Dendritic cell treated with granulocyte-macrophage colony-stimulating factor and Interleukin-4, amounts not matched to agents 40 ng/mL and 50 ng/mL, for 4 days (primary cell): ENCODE measurements at regions of chr14 and their contacts with region 1.

Region 1: GRCh38 chr14:86902176-86902950 is 1090.6 kb downstream of the GALC start:
- H3K4me3 Mint-ChIP-seq: no peak overlapping the region
- H3K27ac Mint-ChIP-seq: no peak overlapping the region
- H3K4me1 Mint-ChIP-seq: no peaks in the 10 kb centered on the region
- H3K27me3 Mint-ChIP-seq: no peaks in the 10 kb centered on the region

Region 2: GRCh38 chr14:86462193-86462753 is 440.1 kb before region 1 on chr14:
- intact Hi-C with region 1: loop called (anchors 5 kb)
- H3K4me3 Mint-ChIP-seq: no peak overlapping the region
- H3K27ac Mint-ChIP-seq: no peak overlapping the region
- H3K4me1 Mint-ChIP-seq: peaks cover 9% of the 10 kb centered on the region
- H3K27me3 Mint-ChIP-seq: no peaks in the 10 kb centered on the region

Region 3: GRCh38 chr14:86838363-86838762 is 64.0 kb before region 1 on chr14:
- intact Hi-C with region 1: no loop called
- H3K4me3 Mint-ChIP-seq: no peak overlapping the region
- H3K27ac Mint-ChIP-seq: no peak overlapping the region
- H3K4me1 Mint-ChIP-seq: no peaks in the 10 kb centered on the region
- H3K27me3 Mint-ChIP-seq: no peaks in the 10 kb centered on the region